Activated CD8-positive, alpha-beta T cell treated with anti-CD3 and anti-CD28 coated beads for 36 hours (primary cell): ENCODE measurements at regions of chr5 and their contacts with region 1.

Region 1: GRCh38 chr5:77143998-77144836 is 57.1 kb upstream of the ZBED3 start:
- DNase-seq: peak; percentile 77
- ATAC-seq: peak; percentile 79
- H3K4me3 Mint-ChIP-seq: no peak overlapping the region
- H3K27ac Mint-ChIP-seq: no peak overlapping the region
- H3K4me1 Mint-ChIP-seq: peaks cover 5% of the 10 kb centered on the region
- H3K27me3 Mint-ChIP-seq: peaks cover 1% of the 10 kb centered on the region
- CTCF ChIP-seq: peak; percentile 79

Region 2: DNA sequence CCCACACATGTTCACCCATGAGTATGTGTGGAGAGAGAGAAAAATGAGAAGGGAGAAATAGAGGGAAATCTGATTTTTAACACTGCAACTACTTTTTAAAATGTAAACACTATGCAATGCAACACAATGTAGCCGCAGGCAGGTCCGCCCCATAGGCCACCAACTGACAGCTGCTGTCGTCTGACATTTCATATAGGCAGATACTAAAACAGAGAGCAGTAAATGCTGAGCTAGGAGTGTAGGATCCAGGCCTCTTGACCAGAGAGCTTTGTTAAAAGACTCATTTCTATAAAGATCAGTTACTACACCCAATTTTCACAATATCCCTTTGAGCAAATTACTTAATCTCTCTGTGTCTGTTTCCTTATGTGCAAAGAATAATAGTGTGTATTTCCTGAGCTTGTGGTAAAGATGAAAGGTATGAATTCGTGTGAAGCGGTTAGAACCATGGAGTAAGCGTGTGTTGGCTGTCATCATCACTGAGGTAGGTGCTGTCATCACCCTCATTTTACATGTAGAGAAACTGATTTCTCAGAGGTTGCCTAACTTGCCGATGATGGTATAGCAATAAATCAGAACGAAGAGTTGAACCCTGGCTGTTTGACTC is 11.1 kb after region 1 on chr5:
- CTCF ChIA-PET with region 1: interaction called, 22 read pairs
- POLR2A ChIA-PET with region 1: interaction called, 3 read pairs
- intact Hi-C with region 1: no loop called
- DNase-seq: peak; percentile 63
- ATAC-seq: peak; percentile 93
- H3K4me3 Mint-ChIP-seq: no peak overlapping the region
- H3K27ac Mint-ChIP-seq: peak overlapping the region; percentile 37
- H3K4me1 Mint-ChIP-seq: peaks cover 24% of the 10 kb centered on the region
- H3K27me3 Mint-ChIP-seq: peaks cover 3% of the 10 kb centered on the region
- CTCF ChIP-seq: no peak